Ascending aorta (tissue), 2 donors: ENCODE measurements at regions of chr22 and their contacts with region 1.

Region 1: GRCh38 chr22:20507253-20508066 is at the start of gene MED15:
- DNase-seq: peak; percentile 51 to 95
- H3K4me3 ChIP-seq: peak within 1 kb of the TSS; percentile 76 to 85
- H3K27ac ChIP-seq: peak within 1 kb of the TSS; percentile 98
- H3K4me1 ChIP-seq: peaks cover 12 to 27% of the 10 kb centered on the region in 2 donors
- H3K27me3 ChIP-seq: no peaks in the 10 kb centered on the region
- CTCF ChIP-seq: no peak
- total RNA-seq, gene MED15: 204 TPM

Region 2: GRCh38 chr22:20037419-20037818 is 470.0 kb before region 1 on chr22:
- intact Hi-C with region 1: no loop called
- DNase-seq: no peak
- H3K4me3 ChIP-seq: no peak overlapping the region
- H3K27ac ChIP-seq: no peak overlapping the region
- H3K4me1 ChIP-seq: peaks cover 11 to 14% of the 10 kb centered on the region in 2 donors
- H3K27me3 ChIP-seq: no peaks in the 10 kb centered on the region
- CTCF ChIP-seq: no peak

Region 3: DNA sequence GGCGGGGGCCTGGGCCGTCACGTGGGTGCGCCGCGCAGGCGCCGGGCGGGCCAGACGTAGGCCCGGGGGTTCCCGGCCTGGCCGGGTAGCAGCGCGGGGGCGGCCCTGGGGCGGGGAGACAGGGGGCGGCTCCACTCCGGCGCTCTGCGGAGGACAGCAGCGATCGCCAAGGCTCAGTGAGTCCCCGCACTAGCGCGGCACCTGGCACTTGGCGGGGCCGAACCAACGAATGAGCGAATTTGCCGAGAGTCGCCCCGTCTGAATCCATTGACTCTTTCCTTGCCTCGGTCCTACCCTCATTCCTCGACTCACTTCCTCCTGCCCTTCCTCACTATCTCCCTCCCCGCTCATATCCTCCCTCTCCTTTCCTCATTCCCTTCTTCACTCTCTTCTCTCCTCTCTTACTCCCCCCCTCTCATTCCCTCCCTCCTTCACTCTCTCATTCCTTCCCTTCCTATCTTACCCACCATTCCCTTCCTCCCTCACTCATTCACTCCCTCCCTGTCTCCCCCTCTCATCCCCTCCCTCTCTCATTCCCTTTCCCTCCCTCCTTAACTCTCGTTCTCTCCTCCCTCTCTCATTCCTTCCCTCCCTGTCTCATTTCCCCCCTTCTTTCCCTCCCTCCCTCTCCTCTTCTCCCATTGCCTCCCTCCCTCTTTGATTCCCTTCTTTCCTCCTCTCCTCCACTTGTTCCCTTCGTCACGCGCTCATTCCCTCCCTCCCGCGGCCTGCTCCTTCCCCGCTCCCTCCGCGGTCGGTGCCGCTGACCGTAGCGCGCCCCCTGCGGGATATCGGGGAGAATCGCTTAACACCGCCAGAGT is 11.4 kb before region 1 on chr22:
- intact Hi-C with region 1: loop called (anchors 1 kb)
- DNase-seq: peak; percentile 57 to 94
- H3K4me3 ChIP-seq: peak overlapping the region; percentile 93 to 96
- H3K27ac ChIP-seq: peak overlapping the region; percentile 90 to 99
- H3K4me1 ChIP-seq: peaks cover 0 to 20% of the 10 kb centered on the region in 2 donors
- H3K27me3 ChIP-seq: no peaks in the 10 kb centered on the region
- CTCF ChIP-seq: peak; percentile 86 to 92 (median 88)

Region 4: GRCh38 chr22:20550821-20551744 is 43.6 kb after region 1 on chr22:
- intact Hi-C with region 1: loop called (anchors 1 kb)
- DNase-seq: peak in 1 of 2 donors; percentile 85
- H3K4me3 ChIP-seq: peak overlapping the region in 1 of 2 donors; percentile 23
- H3K27ac ChIP-seq: peak overlapping the region; percentile 95 to 98
- H3K4me1 ChIP-seq: peaks cover 35 to 65% of the 10 kb centered on the region in 2 donors
- H3K27me3 ChIP-seq: no peaks in the 10 kb centered on the region
- CTCF ChIP-seq: no peak

Region 5: DNA sequence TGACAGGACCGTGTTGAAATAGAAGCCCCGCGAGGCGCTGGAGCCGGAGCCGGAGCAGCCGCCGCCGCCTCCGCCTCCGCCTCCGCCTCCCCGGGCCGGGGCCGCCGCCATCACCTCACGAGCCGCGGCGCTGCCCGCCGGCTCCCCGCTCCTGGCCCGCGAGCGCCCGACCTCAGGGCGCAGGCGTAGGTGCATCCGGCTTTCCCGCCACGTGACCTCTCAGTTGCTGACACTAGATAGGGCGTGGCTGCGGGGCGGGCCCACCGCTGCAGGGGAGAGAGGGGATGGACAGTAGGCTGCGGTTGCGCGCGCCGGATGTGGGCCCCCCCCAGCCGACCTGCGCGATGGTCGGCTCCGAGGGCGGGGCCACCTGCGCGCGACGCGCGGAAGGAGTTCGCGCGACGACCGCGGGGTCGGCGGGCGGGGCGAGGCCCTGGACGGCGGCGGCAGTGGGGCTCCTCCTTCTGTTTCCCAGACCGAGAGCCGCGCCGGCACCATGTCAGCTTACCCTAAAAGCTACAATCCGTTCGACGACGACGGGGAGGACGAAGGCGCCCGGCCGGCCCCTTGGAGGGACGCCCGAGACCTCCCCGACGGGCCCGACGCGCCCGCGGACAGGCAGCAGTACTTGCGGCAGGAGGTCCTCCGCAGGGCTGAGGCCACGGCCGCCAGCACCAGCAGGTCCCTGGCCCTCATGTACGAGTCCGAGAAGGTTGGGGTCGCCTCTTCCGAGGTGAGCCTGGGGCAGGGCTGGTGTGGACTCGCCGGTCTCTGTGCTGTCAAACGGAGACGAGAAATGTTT is 351.4 kb after region 1 on chr22 and contains the starts of genes PI4KA and SNAP29:
- intact Hi-C with region 1: loop called (anchors 5 kb)
- DNase-seq: peak; percentile 98 to 100
- H3K4me3 ChIP-seq: peak within 1 kb of the TSS; percentile 82 to 91
- H3K27ac ChIP-seq: peak within 1 kb of the TSS; percentile 89 to 97
- H3K4me1 ChIP-seq: peaks cover 0 to 22% of the 10 kb centered on the region in 2 donors
- H3K27me3 ChIP-seq: no peaks in the 10 kb centered on the region
- CTCF ChIP-seq: peak in 1 of 3 experiments; percentile 47
- total RNA-seq, gene PI4KA: 150 TPM
- total RNA-seq, gene SNAP29: 24.6 TPM